ENCODE measurements at regions of chr5 and their contacts with region 1.

Region 1: DNA sequence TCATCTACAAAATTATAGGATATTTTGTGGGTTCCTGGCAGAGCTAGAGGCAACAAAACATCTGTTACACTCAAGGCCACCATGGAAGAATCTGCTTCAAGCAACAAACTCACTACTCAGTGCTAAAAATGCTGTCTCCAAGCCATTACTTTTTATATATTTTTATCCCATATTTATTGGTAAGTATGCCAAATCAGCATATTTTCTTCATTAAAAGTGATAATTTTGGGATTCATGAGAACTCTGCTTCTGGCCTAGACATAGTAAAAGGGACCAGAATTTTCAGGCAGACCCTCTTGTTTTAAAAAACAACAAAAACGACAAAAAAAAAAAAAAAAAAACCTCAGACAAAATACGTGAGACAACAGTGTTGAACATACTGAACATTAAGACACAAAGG is 236.0 kb downstream of the EDIL3 start:
- DNase-seq: no peak
- H3K4me3 ChIP-seq: no peak overlapping the region
- H3K4me3 Mint-ChIP-seq: no peak overlapping the region
- H3K27ac Mint-ChIP-seq: no peak overlapping the region
- H3K4me1 ChIP-seq: no peaks in the 10 kb centered on the region
- H3K4me1 Mint-ChIP-seq: no peaks in the 10 kb centered on the region
- H3K27me3 ChIP-seq: no peaks in the 10 kb centered on the region
- H3K27me3 Mint-ChIP-seq: no peaks in the 10 kb centered on the region
- CTCF ChIP-seq: no peak

Region 2: DNA sequence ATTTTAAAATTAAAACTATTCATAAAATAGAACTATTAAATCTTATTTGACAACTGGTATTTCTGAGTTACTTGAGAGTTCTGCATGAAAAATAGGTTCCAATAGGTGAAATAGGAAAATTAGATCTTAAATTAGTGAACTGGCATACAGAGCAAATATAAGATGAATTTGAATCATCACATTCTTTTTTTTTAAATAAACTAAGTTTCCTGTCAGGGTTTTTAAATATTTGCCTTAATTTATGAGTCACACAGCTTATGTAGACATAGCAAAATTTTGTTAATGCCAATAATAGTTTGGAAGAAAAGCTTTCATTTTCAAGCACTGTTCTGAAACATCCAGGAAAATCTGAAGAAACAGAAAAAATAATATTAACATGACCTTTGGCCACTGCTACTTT is 116.3 kb before region 1 on chr5:
- CTCF ChIA-PET with region 1: no interaction called
- POLR2A ChIA-PET with region 1: interaction called, 11 read pairs
- intact Hi-C with region 1: no loop called
- DNase-seq: no peak
- H3K4me3 ChIP-seq: no peak overlapping the region
- H3K4me3 Mint-ChIP-seq: no peak overlapping the region
- H3K27ac Mint-ChIP-seq: no peak overlapping the region
- H3K4me1 ChIP-seq: no peaks in the 10 kb centered on the region
- H3K4me1 Mint-ChIP-seq: no peaks in the 10 kb centered on the region
- H3K27me3 ChIP-seq: no peaks in the 10 kb centered on the region
- H3K27me3 Mint-ChIP-seq: peaks cover 3% of the 10 kb centered on the region
- CTCF ChIP-seq: no peak

Region 3: DNA sequence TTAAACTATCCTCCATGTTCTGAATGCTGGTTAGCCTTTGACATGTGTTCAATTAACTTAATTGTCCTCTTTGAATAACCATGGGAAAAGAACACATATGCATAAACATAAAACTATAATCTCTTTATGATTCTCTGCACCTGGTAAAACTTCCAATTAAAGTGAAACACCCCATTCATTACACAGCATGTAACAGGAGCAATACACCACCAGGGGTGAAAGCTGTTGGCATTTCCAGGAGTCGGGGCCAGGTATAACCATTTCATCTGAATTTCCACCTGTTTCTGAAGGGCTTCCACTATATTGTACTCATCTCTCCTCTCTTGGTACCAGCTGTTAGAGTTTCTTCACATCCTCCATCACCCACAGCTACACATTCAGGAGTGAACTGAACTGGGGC is 67.7 kb before region 1 on chr5:
- CTCF ChIA-PET with region 1: no interaction called
- POLR2A ChIA-PET with region 1: no interaction called
- intact Hi-C with region 1: no loop called
- DNase-seq: no peak
- H3K4me3 ChIP-seq: no peak overlapping the region
- H3K4me3 Mint-ChIP-seq: no peak overlapping the region
- H3K27ac Mint-ChIP-seq: no peak overlapping the region
- H3K4me1 ChIP-seq: no peaks in the 10 kb centered on the region
- H3K4me1 Mint-ChIP-seq: no peaks in the 10 kb centered on the region
- H3K27me3 ChIP-seq: no peaks in the 10 kb centered on the region; the same call in 1 of the 2 replicates
- H3K27me3 Mint-ChIP-seq: peaks cover 8% of the 10 kb centered on the region
- CTCF ChIP-seq: no peak

Region 4: GRCh38 chr5:84332106-84332505 is 183.5 kb after region 1 on chr5:
- CTCF ChIA-PET with region 1: no interaction called
- POLR2A ChIA-PET with region 1: no interaction called
- intact Hi-C with region 1: no loop called
- DNase-seq: no peak
- H3K4me3 ChIP-seq: no peak overlapping the region
- H3K4me3 Mint-ChIP-seq: no peak overlapping the region
- H3K27ac Mint-ChIP-seq: no peak overlapping the region
- H3K4me1 ChIP-seq: no peaks in the 10 kb centered on the region
- H3K4me1 Mint-ChIP-seq: no peaks in the 10 kb centered on the region
- H3K27me3 ChIP-seq: no peaks in the 10 kb centered on the region
- H3K27me3 Mint-ChIP-seq: no peaks in the 10 kb centered on the region
- CTCF ChIP-seq: no peak